ENCODE measurements at regions of chr1 and their contacts with region 1.

Region 1: GRCh38 chr1:162023547-162024501 is at the start of gene OLFML2B:
- DNase-seq: peak; percentile 59
- H3K4me3 Mint-ChIP-seq: peak within 1 kb of the TSS; percentile 70
- H3K27ac Mint-ChIP-seq: no peak within 1 kb of the TSS
- H3K4me1 Mint-ChIP-seq: peaks cover 6% of the 10 kb centered on the region
- H3K27me3 Mint-ChIP-seq: peaks cover 34% of the 10 kb centered on the region
- total RNA-seq, gene OLFML2B: not detected

Region 2: GRCh38 chr1:161511018-161511755 is 512.6 kb before region 1 on chr1:
- CTCF ChIA-PET with region 1: no interaction called
- POLR2A ChIA-PET with region 1: no interaction called
- intact Hi-C with region 1: no loop called
- DNase-seq: no peak
- H3K4me3 Mint-ChIP-seq: no peak overlapping the region
- H3K27ac Mint-ChIP-seq: no peak overlapping the region
- H3K4me1 Mint-ChIP-seq: peaks cover 9% of the 10 kb centered on the region
- H3K27me3 Mint-ChIP-seq: peaks cover 3% of the 10 kb centered on the region

Region 3: GRCh38 chr1:161962091-161962887 is 61.5 kb before region 1 on chr1:
- CTCF ChIA-PET with region 1: no interaction called
- POLR2A ChIA-PET with region 1: no interaction called
- intact Hi-C with region 1: loop called (anchors 2 kb)
- DNase-seq: peak; percentile 67
- H3K4me3 Mint-ChIP-seq: peak overlapping the region; percentile 73
- H3K27ac Mint-ChIP-seq: peak overlapping the region; percentile 90
- H3K4me1 Mint-ChIP-seq: peaks cover 52% of the 10 kb centered on the region
- H3K27me3 Mint-ChIP-seq: no peaks in the 10 kb centered on the region

Region 4: GRCh38 chr1:162040681-162041080 is 16.9 kb after region 1 on chr1:
- CTCF ChIA-PET with region 1: interaction called, 15 read pairs
- POLR2A ChIA-PET with region 1: no interaction called
- intact Hi-C with region 1: no loop called
- DNase-seq: no peak
- H3K4me3 Mint-ChIP-seq: no peak overlapping the region
- H3K27ac Mint-ChIP-seq: no peak overlapping the region
- H3K4me1 Mint-ChIP-seq: no peaks in the 10 kb centered on the region
- H3K27me3 Mint-ChIP-seq: peaks cover 10% of the 10 kb centered on the region

Measured in activated CD4-positive, alpha-beta memory T cell treated with anti-CD3 and anti-CD28 coated beads for 36 hours (primary cell).